H1 (cell line): ENCODE measurements at regions of chr18 and their contacts with region 1.

Region 1: GRCh38 chr18:3771121-3771971 is 321.4 kb downstream of the TGIF1 start:
- DNase-seq: peak; percentile 54 to 99
- H3K4me3 ChIP-seq: peak overlapping the region; percentile 29 to 63 (median 50); a peak in 7 of 8 replicates
- H3K27ac ChIP-seq: no peak overlapping the region
- H3K4me1 ChIP-seq: peaks cover 0 to 13% (median 6%) of the 10 kb centered on the region in 4 experiments; a peak in 5 of 7 replicates
- H3K27me3 ChIP-seq: no peaks in the 10 kb centered on the region
- CTCF ChIP-seq: peak; percentile 85 to 94 (median 88)
- EP300 ChIP-seq: no peak
- POLR2A ChIP-seq: no peak
- RAD21 ChIP-seq: peak; percentile 84 to 86

Region 2: DNA sequence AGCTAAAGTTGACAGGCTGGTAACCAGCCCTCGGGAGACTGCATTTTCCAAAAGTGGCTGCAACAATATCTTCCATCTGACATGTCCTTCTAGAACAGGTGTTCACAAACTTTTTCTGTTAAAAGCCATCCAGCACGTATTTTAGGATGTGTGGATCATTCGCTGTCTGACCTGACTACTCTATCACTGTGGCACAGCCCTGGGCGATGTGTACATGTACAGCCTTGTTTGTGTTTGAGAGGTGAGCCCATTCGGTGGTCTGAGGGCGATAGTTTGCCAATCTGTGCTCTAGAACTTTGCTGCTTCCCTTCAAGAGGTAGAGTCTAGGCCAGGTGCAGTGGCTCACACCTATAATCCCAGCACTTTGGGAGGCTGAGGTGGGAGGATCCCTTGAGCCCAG is 155.2 kb before region 1 on chr18:
- CTCF ChIA-PET with region 1: no interaction called
- POLR2A ChIA-PET with region 1: no interaction called
- DNase-seq: no peak
- H3K4me3 ChIP-seq: no peak overlapping the region
- H3K27ac ChIP-seq: peak overlapping the region; percentile 3; the same call in 1 of the 2 replicates
- H3K4me1 ChIP-seq: peaks cover 0 to 10% (median 2%) of the 10 kb centered on the region in 4 experiments; a peak in 5 of 7 replicates
- H3K27me3 ChIP-seq: no peaks in the 10 kb centered on the region
- CTCF ChIP-seq: no peak
- EP300 ChIP-seq: no peak
- POLR2A ChIP-seq: no peak
- RAD21 ChIP-seq: no peak

Region 3: DNA sequence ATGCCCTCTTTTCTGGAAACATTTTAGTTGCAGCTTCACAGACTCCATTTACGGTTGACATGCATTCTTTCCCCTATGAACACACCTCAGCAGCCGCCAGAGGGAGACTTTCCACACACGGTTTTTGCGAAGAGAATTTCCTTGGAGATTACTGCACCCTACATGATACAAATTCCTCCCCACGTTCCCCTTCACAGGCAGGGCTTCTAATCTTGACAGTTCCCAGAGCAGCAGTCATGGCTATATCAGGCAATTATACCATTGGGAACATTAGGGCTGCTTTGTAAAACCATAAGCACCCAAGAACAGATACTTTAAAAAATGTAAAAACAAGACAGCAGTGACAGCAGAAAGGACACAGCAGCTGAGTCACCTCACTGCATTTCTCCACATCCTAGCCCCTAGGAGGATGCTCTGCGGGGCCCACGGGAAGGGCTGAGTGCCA is 67.6 kb before region 1 on chr18:
- CTCF ChIA-PET with region 1: interaction called, 25 read pairs
- POLR2A ChIA-PET with region 1: no interaction called
- DNase-seq: peak in 1 of 2 experiments; percentile 65
- H3K4me3 ChIP-seq: no peak overlapping the region
- H3K27ac ChIP-seq: no peak overlapping the region
- H3K4me1 ChIP-seq: 0 out of 7 replicates have a peak, but pooled peaks cover 0 to 2% (median 0%) of the 10 kb centered on the region in 4 experiments
- H3K27me3 ChIP-seq: no peaks in the 10 kb centered on the region
- CTCF ChIP-seq: peak; percentile 51 to 76 (median 73)
- EP300 ChIP-seq: no peak
- POLR2A ChIP-seq: no peak
- RAD21 ChIP-seq: peak; percentile 75 to 79

Region 4: DNA sequence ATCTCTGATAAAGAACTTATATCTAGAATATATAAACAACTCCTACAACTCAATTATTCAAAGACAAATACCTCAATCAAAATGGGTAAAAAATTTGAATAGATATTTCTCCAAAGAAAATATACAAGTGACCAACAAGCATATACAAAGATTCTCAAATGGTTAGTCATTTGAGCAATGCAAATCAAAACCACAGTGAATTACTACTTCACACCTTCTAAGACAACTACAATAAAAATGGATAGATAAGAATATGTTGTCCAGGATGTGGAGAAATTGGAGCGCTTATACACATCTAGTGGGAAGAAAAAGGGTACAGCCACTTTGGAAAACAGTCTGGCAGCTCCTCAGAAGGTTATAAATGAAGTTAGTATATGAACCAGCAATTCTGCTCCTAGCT is 11.6 kb after region 1 on chr18:
- CTCF ChIA-PET with region 1: interaction called, 43 read pairs
- POLR2A ChIA-PET with region 1: no interaction called
- DNase-seq: no peak
- H3K4me3 ChIP-seq: no peak overlapping the region
- H3K27ac ChIP-seq: no peak overlapping the region
- H3K4me1 ChIP-seq: no peaks in the 10 kb centered on the region
- H3K27me3 ChIP-seq: no peaks in the 10 kb centered on the region
- CTCF ChIP-seq: no peak
- EP300 ChIP-seq: no peak
- POLR2A ChIP-seq: no peak
- RAD21 ChIP-seq: no peak

Region 5: GRCh38 chr18:3806656-3807055 is 35.3 kb after region 1 on chr18:
- CTCF ChIA-PET with region 1: interaction called, 52 read pairs
- POLR2A ChIA-PET with region 1: no interaction called
- DNase-seq: no peak
- H3K4me3 ChIP-seq: no peak overlapping the region
- H3K27ac ChIP-seq: no peak overlapping the region
- H3K4me1 ChIP-seq: peaks cover 2 to 11% (median 6%) of the 10 kb centered on the region in 4 experiments; a peak in 3 of 7 replicates
- H3K27me3 ChIP-seq: no peaks in the 10 kb centered on the region
- CTCF ChIP-seq: no peak
- EP300 ChIP-seq: no peak
- POLR2A ChIP-seq: no peak
- RAD21 ChIP-seq: 0 out of 4 replicates have a peak, but pooled peaks of 1 of the 2 experiments have one; percentile 0

Region 6: GRCh38 chr18:3842844-3843243 is 71.5 kb after region 1 on chr18:
- CTCF ChIA-PET with region 1: interaction called, 16 read pairs
- POLR2A ChIA-PET with region 1: no interaction called
- DNase-seq: no peak
- H3K4me3 ChIP-seq: no peak overlapping the region
- H3K27ac ChIP-seq: no peak overlapping the region
- H3K4me1 ChIP-seq: peaks cover 0 to 2% (median under 1%) of the 10 kb centered on the region in 4 experiments; a peak in 3 of 7 replicates
- H3K27me3 ChIP-seq: no peaks in the 10 kb centered on the region
- CTCF ChIP-seq: no peak
- EP300 ChIP-seq: no peak
- POLR2A ChIP-seq: no peak
- RAD21 ChIP-seq: no peak

Region 7: GRCh38 chr18:3869848-3870247 is 98.5 kb after region 1 on chr18:
- CTCF ChIA-PET with region 1: interaction called, 107 read pairs
- POLR2A ChIA-PET with region 1: interaction called, 4 read pairs
- DNase-seq: no peak
- H3K4me3 ChIP-seq: no peak overlapping the region
- H3K27ac ChIP-seq: no peak overlapping the region
- H3K4me1 ChIP-seq: peaks cover 0 to 4% (median 1%) of the 10 kb centered on the region in 4 experiments; a peak in 3 of 7 replicates
- H3K27me3 ChIP-seq: no peaks in the 10 kb centered on the region
- CTCF ChIP-seq: peak in 2 of 3 experiments; percentile 54 to 58; a peak in 2 of 4 replicates
- EP300 ChIP-seq: no peak
- POLR2A ChIP-seq: no peak
- RAD21 ChIP-seq: peak; percentile 85 to 88

Region 8: DNA sequence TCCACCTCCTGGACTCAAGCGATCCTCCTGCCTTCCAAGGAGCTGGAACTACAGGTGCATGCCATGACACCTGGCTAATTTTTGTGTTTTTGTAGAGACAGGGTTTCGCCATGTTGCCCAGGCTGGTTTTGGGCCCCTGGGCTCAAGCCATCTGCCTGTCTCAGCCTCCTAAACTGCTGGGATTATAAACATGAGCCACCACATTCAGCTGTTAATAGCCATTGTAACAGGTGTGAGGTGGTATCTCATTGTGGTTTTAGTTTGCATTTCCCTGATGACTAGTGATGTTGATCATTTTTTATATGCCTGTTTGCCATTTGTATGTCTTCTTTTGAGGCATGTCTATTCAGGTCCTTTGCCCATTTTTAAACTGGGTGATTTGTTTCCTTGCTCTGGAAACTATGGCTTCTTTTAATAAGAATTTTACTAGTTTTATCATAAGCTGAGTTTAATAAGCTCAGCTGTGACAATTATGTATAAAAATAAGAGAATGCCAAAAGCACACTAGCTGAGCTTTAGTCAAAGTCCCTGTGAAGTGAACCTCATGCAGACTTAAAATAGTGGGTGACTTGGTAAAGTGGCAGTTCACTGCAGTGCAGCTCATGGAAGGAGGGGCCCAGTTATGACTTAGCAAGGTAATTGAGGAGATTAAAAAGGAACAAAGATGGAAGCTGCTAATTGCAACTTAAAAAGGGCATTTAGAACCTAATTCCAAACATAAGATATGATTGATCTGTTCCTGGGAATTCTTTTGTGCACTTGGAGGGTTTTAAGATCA is 143.7 kb after region 1 on chr18:
- CTCF ChIA-PET with region 1: no interaction called
- POLR2A ChIA-PET with region 1: no interaction called
- DNase-seq: no peak
- H3K4me3 ChIP-seq: no peak overlapping the region
- H3K27ac ChIP-seq: no peak overlapping the region
- H3K4me1 ChIP-seq: no peaks in the 10 kb centered on the region; a peak in 1 of 7 replicates
- H3K27me3 ChIP-seq: no peaks in the 10 kb centered on the region
- CTCF ChIP-seq: no peak
- EP300 ChIP-seq: no peak
- POLR2A ChIP-seq: no peak
- RAD21 ChIP-seq: no peak

Region 9: DNA sequence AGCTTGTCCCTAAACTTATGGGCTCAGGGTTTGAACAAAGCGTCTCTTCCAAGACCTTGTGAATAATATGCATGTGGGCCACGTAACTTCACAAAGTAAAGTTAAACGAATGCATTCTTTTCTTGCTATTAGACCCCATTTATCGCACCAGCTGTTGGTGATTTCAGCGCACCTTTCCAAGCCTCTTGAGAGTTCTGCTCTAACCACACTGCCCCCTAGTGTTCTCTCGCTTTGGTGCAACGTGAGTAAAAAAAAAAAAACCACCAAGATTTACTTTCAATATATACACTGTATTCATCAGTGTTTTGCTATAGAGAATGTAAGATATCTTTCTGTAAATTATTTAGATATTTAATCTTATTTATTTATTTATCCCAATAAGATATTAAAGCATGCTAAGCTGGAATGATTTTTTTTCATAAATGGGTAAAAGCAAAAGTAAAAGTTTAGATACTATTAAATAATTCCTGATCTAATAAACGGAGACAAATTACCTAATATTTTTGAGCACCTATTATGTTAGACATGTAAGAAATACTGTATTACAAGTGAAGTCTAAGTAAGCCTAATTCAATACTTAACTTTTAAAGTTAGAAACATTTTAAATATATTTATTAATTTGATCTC is 224.2 kb after region 1 on chr18:
- CTCF ChIA-PET with region 1: interaction called, 27 read pairs
- POLR2A ChIA-PET with region 1: no interaction called
- DNase-seq: peak in 1 of 2 experiments; percentile 69
- H3K4me3 ChIP-seq: no peak overlapping the region
- H3K27ac ChIP-seq: no peak overlapping the region
- H3K4me1 ChIP-seq: peaks cover 0 to 7% (median 3%) of the 10 kb centered on the region in 4 experiments; a peak in 4 of 7 replicates
- H3K27me3 ChIP-seq: no peaks in the 10 kb centered on the region
- CTCF ChIP-seq: peak; percentile 21 to 66 (median 66)
- EP300 ChIP-seq: no peak
- POLR2A ChIP-seq: no peak
- RAD21 ChIP-seq: peak; percentile 72 to 76

Region 10: GRCh38 chr18:4007846-4008245 is 236.5 kb after region 1 on chr18:
- CTCF ChIA-PET with region 1: no interaction called
- POLR2A ChIA-PET with region 1: no interaction called
- DNase-seq: no peak
- H3K4me3 ChIP-seq: no peak overlapping the region
- H3K27ac ChIP-seq: no peak overlapping the region
- H3K4me1 ChIP-seq: peaks cover 0 to 10% (median 2%) of the 10 kb centered on the region in 4 experiments; a peak in 2 of 7 replicates
- H3K27me3 ChIP-seq: no peaks in the 10 kb centered on the region
- CTCF ChIP-seq: no peak
- EP300 ChIP-seq: no peak
- POLR2A ChIP-seq: no peak
- RAD21 ChIP-seq: no peak

Region 11: DNA sequence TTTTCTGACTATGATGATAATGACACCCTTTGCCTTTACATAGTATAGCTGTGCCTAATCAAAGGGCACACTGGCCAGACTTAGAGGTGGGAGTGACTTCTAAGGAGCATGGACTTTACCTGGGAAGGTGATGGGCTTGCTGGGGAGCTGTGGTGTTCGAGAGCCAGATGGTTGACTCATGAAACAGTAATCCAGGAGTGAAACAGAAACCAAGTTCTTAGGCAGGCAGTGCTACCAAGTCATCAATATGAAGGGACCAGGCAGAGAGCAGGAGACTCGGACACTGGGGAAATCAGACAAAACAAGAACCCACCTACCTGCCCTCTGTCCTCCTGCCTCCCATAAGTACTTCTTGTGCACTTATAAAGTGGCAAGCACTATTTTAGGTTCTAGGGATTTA is 253.4 kb after region 1 on chr18:
- CTCF ChIA-PET with region 1: no interaction called
- POLR2A ChIA-PET with region 1: no interaction called
- DNase-seq: no peak
- H3K4me3 ChIP-seq: no peak overlapping the region
- H3K27ac ChIP-seq: no peak overlapping the region
- H3K4me1 ChIP-seq: peaks cover 0 to 11% (median under 1%) of the 10 kb centered on the region in 4 experiments; a peak in 2 of 7 replicates
- H3K27me3 ChIP-seq: no peaks in the 10 kb centered on the region
- CTCF ChIP-seq: no peak
- EP300 ChIP-seq: no peak
- POLR2A ChIP-seq: no peak
- RAD21 ChIP-seq: no peak